Caco-2 (cell line): ENCODE measurements at regions of chr15 and their contacts with region 1.

Region 1: GRCh38 chr15:73697033-73697467 is 12.9 kb downstream of the CD276 start:
- DNase-seq: no peak
- H3K4me3 ChIP-seq: no peak overlapping the region
- H3K4me3 Mint-ChIP-seq: no peak overlapping the region
- H3K27ac Mint-ChIP-seq: no peak overlapping the region
- H3K4me1 ChIP-seq: no peaks in the 10 kb centered on the region
- H3K4me1 Mint-ChIP-seq: peaks cover 12% of the 10 kb centered on the region
- H3K27me3 ChIP-seq: no peaks in the 10 kb centered on the region
- H3K27me3 Mint-ChIP-seq: no peaks in the 10 kb centered on the region
- CTCF ChIP-seq: no peak

Region 2: GRCh38 chr15:73560501-73561117 is 136.4 kb before region 1 on chr15:
- CTCF ChIA-PET with region 1: interaction called, 7 read pairs
- POLR2A ChIA-PET with region 1: no interaction called
- intact Hi-C with region 1: loop called (anchors 1 kb)
- DNase-seq: peak in 1 of 2 experiments; percentile 42
- H3K4me3 ChIP-seq: no peak overlapping the region
- H3K4me3 Mint-ChIP-seq: no peak overlapping the region
- H3K27ac Mint-ChIP-seq: no peak overlapping the region
- H3K4me1 ChIP-seq: no peaks in the 10 kb centered on the region
- H3K4me1 Mint-ChIP-seq: no peaks in the 10 kb centered on the region
- H3K27me3 ChIP-seq: no peaks in the 10 kb centered on the region
- H3K27me3 Mint-ChIP-seq: no peaks in the 10 kb centered on the region
- CTCF ChIP-seq: peak; percentile 45 to 50

Region 3: GRCh38 chr15:73677146-73677607 is 19.9 kb before region 1 on chr15:
- CTCF ChIA-PET with region 1: interaction called, 16 read pairs
- POLR2A ChIA-PET with region 1: no interaction called
- intact Hi-C with region 1: loop called (anchors 1 kb)
- DNase-seq: peak; percentile 69 to 75
- H3K4me3 ChIP-seq: no peak overlapping the region
- H3K4me3 Mint-ChIP-seq: no peak overlapping the region
- H3K27ac Mint-ChIP-seq: no peak overlapping the region
- H3K4me1 ChIP-seq: no peaks in the 10 kb centered on the region
- H3K4me1 Mint-ChIP-seq: no peaks in the 10 kb centered on the region
- H3K27me3 ChIP-seq: no peaks in the 10 kb centered on the region
- H3K27me3 Mint-ChIP-seq: peaks cover 8% of the 10 kb centered on the region
- CTCF ChIP-seq: peak; percentile 80 to 81

Region 4: GRCh38 chr15:73683777-73684580 is 13.1 kb before region 1 on chr15 and contains the start of gene CD276:
- CTCF ChIA-PET with region 1: interaction called, 14 read pairs
- POLR2A ChIA-PET with region 1: no interaction called
- intact Hi-C with region 1: loop called (anchors 1 kb)
- DNase-seq: peak; percentile 79 to 84
- H3K4me3 ChIP-seq: peak within 1 kb of the TSS; percentile 88
- H3K4me3 Mint-ChIP-seq: peak within 1 kb of the TSS; percentile 84
- H3K27ac Mint-ChIP-seq: peak within 1 kb of the TSS; percentile 71
- H3K4me1 ChIP-seq: peaks cover 13% of the 10 kb centered on the region
- H3K4me1 Mint-ChIP-seq: peaks cover 24% of the 10 kb centered on the region
- H3K27me3 ChIP-seq: no peaks in the 10 kb centered on the region
- H3K27me3 Mint-ChIP-seq: no peaks in the 10 kb centered on the region
- CTCF ChIP-seq: peak in 1 of 2 experiments; percentile 79
- total RNA-seq, gene CD276: 70.5 and 74.2 TPM in 2 replicates

Region 5: DNA sequence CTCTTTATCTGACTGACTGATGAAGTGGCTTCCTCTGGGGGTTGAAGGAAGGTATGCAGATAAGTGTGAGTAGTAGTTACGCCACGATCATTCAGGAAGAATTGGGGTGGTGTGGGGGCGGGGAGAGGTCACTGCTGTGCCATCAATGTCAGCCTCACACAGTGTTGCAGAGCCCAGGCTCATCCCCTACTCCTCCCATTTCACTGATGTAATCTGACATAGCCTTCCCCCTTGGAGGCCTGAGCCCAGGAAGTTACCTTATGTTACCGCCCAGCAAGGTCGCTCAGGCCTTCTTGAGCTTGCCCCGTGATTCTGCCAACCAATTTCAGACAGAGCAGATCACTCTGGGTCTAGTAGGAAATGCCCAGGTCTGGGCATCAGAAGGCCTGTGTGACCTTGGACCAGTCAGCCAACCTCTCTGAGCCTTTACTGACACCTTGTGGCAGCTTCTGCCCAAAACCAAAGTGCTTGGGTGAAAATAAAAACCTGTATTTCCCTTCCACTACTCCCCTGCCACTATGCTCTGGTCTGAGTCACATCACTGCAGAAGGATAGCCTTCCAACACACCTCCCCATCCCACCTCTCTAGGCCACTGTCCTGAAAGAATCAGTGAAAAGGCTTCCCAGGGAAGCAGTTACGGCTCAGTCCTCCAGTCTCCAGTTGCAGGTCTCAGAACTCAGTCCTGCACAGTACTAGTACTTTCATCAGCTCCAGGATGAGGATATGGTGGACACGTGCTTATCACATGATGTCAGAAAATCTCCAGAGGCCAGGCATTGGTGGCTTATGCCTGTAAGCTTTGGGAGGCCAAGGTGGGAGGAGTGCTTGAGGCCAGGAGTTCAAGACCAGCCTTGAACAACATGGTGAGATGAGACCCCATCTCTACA is 84.2 kb after region 1 on chr15:
- CTCF ChIA-PET with region 1: no interaction called
- POLR2A ChIA-PET with region 1: no interaction called
- intact Hi-C with region 1: no loop called
- DNase-seq: peak in 1 of 2 experiments; percentile 13
- H3K4me3 ChIP-seq: no peak overlapping the region
- H3K4me3 Mint-ChIP-seq: no peak overlapping the region
- H3K27ac Mint-ChIP-seq: no peak overlapping the region
- H3K4me1 ChIP-seq: no peaks in the 10 kb centered on the region
- H3K4me1 Mint-ChIP-seq: no peaks in the 10 kb centered on the region
- H3K27me3 ChIP-seq: no peaks in the 10 kb centered on the region
- H3K27me3 Mint-ChIP-seq: peaks cover 7% of the 10 kb centered on the region
- CTCF ChIP-seq: peak in 1 of 2 experiments; percentile 30

Region 6: DNA sequence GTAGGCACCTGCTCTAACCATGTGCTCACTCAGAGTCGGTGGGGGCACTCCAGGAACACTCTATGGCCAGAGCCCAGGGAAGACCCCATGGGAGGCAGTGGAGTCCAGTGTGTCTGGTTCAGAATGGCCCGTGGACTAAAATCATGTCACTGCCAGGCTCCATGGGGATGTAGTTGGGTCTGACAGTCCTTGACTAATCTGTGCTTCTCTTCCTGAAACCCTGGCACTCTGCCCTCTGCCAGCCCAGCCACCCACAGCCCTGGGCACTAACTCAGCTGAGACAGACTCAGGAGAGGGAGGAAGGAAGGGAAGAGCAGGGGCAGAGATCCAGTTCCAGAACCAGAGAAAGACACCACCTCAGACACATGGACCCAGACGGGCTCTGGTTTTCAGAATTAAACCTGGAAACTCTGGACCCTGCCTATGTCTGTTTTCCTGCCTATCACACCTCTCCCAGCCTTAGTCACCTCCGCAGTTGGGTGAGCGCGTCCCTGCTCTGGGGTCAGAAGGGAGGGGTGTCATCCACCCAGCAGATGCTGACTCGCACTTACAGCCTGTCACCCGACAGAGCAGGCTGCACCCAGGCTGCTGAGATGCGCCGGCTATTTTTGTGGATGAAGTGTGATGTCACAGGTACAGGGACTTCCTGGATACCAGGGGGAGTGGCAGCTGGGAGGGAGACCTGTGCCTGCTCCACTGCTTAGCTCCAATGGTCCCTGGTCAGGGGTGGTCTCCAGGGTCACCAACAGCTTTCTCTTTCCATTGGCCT is 112.9 kb after region 1 on chr15:
- CTCF ChIA-PET with region 1: no interaction called
- POLR2A ChIA-PET with region 1: no interaction called
- intact Hi-C with region 1: no loop called
- DNase-seq: no peak
- H3K4me3 ChIP-seq: no peak overlapping the region
- H3K4me3 Mint-ChIP-seq: no peak overlapping the region
- H3K27ac Mint-ChIP-seq: no peak overlapping the region
- H3K4me1 ChIP-seq: no peaks in the 10 kb centered on the region
- H3K4me1 Mint-ChIP-seq: peaks cover 6% of the 10 kb centered on the region
- H3K27me3 ChIP-seq: no peaks in the 10 kb centered on the region; the same call in 1 of the 2 replicates
- H3K27me3 Mint-ChIP-seq: no peaks in the 10 kb centered on the region
- CTCF ChIP-seq: no peak